Prostate gland (tissue), 2 donors: ENCODE measurements at regions of chr17 and their contacts with region 1.

Region 1: GRCh38 chr17:60993497-60993896 is 315.8 kb downstream of the BCAS3 start:
- DNase-seq: no peak
- H3K4me3 ChIP-seq: no peak overlapping the region
- H3K27ac ChIP-seq: no peak overlapping the region
- H3K4me1 ChIP-seq: no peaks in the 10 kb centered on the region
- H3K27me3 ChIP-seq: no peaks in the 10 kb centered on the region
- CTCF ChIP-seq: no peak
- POLR2A ChIP-seq: no peak

Region 2: DNA sequence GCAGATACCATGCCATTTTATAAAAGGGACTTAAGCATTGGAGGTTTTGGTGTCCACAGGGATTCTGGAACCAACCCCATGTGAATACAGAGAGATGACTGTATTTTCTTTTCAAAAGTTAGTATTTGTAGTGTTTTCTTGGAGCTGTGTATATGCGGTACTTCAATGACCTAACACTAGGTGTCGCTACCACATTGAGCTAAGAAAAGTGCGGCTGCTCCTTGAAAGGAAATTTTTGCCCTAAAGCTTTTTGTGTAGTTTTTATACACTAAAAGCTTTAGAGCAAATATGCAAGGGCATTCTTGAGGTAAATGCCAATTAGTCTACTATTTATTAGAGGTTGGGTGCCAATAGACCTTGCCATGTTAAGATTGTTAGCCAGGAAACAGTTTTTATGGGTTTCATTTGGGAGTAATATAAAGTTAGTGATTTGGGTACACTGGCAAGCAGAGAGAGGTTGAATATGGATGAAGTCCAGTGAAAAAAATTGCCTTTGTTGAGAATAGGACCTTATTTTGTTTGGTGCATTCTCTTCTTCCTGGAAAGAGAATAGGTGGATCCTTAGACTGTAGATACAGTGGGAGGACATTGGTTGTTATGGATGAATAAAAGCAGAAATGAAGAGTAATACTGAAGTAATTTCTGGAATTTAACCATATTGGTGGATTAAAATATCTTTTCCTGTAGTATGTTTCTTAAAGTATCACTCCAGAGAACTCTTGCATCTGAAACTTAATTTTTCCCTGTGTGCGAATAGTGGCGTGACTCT is 272.6 kb before region 1 on chr17:
- intact Hi-C with region 1: loop called (anchors 10 kb)
- DNase-seq: peak; percentile 53
- H3K4me3 ChIP-seq: no peak overlapping the region
- H3K27ac ChIP-seq: no peak overlapping the region
- H3K4me1 ChIP-seq: no peaks in the 10 kb centered on the region
- H3K27me3 ChIP-seq: no peaks in the 10 kb centered on the region
- CTCF ChIP-seq: peak; percentile 62 to 85 (median 84)
- POLR2A ChIP-seq: no peak